Cardiac septum (tissue), 1 donor: ENCODE measurements at regions of chr7 and their contacts with region 1.

Region 1: GRCh38 chr7:140778975-140779374 is 82.5 kb downstream of the NDUFB2 start:
- DNase-seq: no peak

Region 2: DNA sequence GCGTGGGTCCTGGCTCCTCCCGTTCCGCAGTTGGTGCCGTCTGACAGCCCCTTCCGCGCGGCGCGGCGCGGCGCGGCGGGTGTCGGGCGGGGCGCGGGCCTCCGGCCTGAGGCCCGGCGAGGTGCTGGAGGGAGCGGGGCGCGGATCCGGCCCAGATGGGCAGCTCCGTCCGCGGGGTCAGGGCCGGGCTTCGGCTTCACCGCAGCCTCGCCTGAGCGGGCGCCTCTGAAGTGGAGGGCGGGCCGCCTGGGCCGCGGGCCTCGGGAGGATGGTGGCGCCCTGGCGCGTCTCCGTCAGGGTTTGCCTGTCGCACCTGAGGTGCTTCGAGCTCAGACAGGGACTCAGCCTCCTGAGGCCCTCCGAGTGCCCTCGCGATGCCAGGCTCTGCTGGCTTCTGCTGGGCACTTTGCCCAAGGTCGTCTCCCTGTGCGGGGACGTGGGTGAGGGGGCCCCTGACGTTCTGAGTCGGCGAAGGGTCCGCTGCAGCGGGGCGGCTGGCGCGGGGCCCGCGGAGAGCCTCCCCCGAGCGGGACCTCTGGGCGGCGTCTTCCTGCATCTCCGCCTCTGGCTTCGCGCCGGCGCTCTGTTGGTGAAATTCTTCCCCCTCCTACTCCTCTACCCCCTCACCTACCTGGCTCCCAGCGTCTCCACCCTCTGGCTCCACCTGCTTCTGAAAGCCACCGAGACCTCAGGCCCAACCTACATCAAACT is 105.8 kb before region 1 on chr7:
- intact Hi-C with region 1: loop called (anchors 10 kb)
- DNase-seq: no peak

Region 3: GRCh38 chr7:140828741-140829140 is 49.8 kb after region 1 on chr7:
- intact Hi-C with region 1: no loop called
- DNase-seq: no peak